ENCODE measurements at regions of chr3 and their contacts with region 1.

Region 1: GRCh38 chr3:192423003-192423349 is 304.4 kb downstream of the FGF12 start:
- DNase-seq: no peak
- H3K4me3 Mint-ChIP-seq: no peak overlapping the region
- H3K27ac Mint-ChIP-seq: no peak overlapping the region
- H3K4me1 Mint-ChIP-seq: no peaks in the 10 kb centered on the region
- H3K27me3 Mint-ChIP-seq: peaks cover 4% of the 10 kb centered on the region

Region 2: GRCh38 chr3:192188218-192188835 is 234.6 kb before region 1 on chr3:
- intact Hi-C with region 1: loop called (anchors 2 kb)
- DNase-seq: no peak
- H3K4me3 Mint-ChIP-seq: no peak overlapping the region
- H3K27ac Mint-ChIP-seq: no peak overlapping the region
- H3K4me1 Mint-ChIP-seq: no peaks in the 10 kb centered on the region
- H3K27me3 Mint-ChIP-seq: no peaks in the 10 kb centered on the region

Region 3: GRCh38 chr3:192409357-192409824 is 13.6 kb before region 1 on chr3:
- intact Hi-C with region 1: no loop called
- DNase-seq: no peak
- H3K4me3 Mint-ChIP-seq: no peak overlapping the region
- H3K27ac Mint-ChIP-seq: no peak overlapping the region
- H3K4me1 Mint-ChIP-seq: no peaks in the 10 kb centered on the region
- H3K27me3 Mint-ChIP-seq: peaks cover 49% of the 10 kb centered on the region

Region 4: GRCh38 chr3:193068365-193068764 is 645.4 kb after region 1 on chr3:
- intact Hi-C with region 1: no loop called
- DNase-seq: no peak
- H3K4me3 Mint-ChIP-seq: no peak overlapping the region
- H3K27ac Mint-ChIP-seq: no peak overlapping the region
- H3K4me1 Mint-ChIP-seq: no peaks in the 10 kb centered on the region
- H3K27me3 Mint-ChIP-seq: peaks cover 7% of the 10 kb centered on the region